ENCODE measurements at regions of chr6 and their contacts with region 1.

Region 1: DNA sequence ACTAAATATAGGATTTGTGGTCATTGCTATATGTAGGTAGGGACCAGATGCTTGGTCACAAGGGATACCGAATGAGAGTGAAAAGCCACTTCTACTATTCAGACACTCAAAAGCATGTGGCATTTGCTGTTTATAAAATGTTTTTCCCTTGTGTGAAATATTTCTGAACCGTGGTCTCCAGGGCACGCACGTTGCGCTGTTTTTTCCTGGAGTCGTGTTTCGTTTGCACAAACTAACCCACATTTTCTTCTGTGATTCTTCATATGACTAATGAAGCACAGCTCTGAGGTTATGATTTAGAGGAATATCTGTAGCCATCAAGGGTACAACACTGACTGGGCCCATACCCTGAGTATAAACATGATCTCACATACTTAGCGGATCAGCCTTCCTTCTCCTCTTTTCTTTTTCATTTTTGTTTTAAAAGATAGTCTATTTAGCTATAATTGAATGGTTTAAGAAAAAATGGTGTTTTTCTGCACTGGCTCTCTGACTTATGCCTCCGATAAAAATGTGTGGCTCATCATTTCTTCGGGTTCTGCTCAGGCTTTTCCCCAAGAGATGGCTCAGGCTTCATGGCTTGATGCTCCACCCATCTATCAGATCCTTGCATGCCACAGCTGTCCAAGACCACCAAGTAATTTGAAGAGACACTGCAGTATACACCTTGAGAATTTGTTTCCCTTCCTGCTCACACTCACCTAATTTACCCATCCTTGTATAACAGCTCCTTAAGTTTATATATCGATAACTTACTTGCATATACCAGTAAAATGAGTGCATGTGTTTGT is 59.9 kb upstream of the HBS1L start:
- DNase-seq: peak; percentile 82
- ATAC-seq: peak; percentile 70
- H3K4me3 Mint-ChIP-seq: peak overlapping the region; percentile 54
- H3K27ac Mint-ChIP-seq: peak overlapping the region; percentile 95
- H3K4me1 Mint-ChIP-seq: peaks cover 79% of the 10 kb centered on the region
- H3K27me3 Mint-ChIP-seq: no peaks in the 10 kb centered on the region

Region 2: DNA sequence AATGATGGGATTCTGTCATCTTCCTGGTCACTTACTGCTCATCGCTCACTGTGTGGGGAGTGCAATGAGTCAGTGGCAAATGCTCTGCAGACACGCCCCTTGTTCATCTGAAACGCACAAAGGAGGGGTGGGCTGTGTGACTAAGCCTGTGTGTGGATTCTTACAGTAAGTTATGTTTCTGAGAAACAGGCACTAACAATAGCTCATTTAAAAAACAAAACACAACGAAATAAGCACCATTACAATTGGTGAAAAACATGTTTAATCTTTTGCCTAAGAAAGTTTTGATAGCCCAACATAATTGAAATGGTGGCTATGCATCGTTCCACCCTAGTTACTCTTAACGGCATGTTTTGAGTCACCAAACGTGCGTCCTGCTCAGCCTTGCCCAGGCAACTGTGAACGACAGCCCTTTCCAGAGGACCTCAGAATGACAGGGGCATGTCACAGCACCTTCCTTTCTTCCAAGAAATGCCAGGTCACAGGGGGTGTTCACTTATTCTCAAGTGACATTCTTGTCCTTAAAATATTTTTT is 678.2 kb before region 1 on chr6:
- CTCF ChIA-PET with region 1: no interaction called
- POLR2A ChIA-PET with region 1: no interaction called
- intact Hi-C with region 1: loop called in 1 of 2 experiments (anchors 2 kb)
- DNase-seq: peak; percentile 84
- ATAC-seq: peak; percentile 90
- H3K4me3 Mint-ChIP-seq: no peak overlapping the region
- H3K27ac Mint-ChIP-seq: peak overlapping the region; percentile 80
- H3K4me1 Mint-ChIP-seq: peaks cover 36% of the 10 kb centered on the region
- H3K27me3 Mint-ChIP-seq: no peaks in the 10 kb centered on the region

Region 3: DNA sequence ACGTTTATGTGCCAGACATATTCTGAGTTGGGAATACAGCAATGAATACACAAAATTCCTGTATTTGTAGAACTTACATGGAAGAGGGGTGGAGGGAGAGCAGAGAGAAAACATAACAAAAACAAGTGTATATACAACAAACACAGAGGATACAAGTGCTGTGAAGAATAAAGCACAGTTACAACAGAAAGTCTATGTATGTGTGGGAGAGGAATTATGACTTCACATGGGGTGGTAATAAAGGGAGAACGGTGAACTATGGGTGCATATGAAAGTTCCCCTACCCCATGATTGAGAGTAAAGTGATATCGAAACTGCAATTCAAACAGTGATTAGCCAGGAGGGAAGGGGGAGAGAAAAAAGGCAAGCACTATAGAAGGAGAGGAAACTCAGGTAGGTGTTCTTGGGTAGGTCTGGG is 84.5 kb before region 1 on chr6:
- CTCF ChIA-PET with region 1: interaction called, 3 read pairs
- POLR2A ChIA-PET with region 1: no interaction called
- intact Hi-C with region 1: loop called in 1 of 2 experiments (anchors 1 kb)
- DNase-seq: no peak
- ATAC-seq: peak; percentile 97
- H3K4me3 Mint-ChIP-seq: peak overlapping the region; percentile 54
- H3K27ac Mint-ChIP-seq: peak overlapping the region; percentile 75
- H3K4me1 Mint-ChIP-seq: peaks cover 69% of the 10 kb centered on the region
- H3K27me3 Mint-ChIP-seq: no peaks in the 10 kb centered on the region

Region 4: GRCh38 chr6:135094403-135094848 is 20.1 kb before region 1 on chr6:
- CTCF ChIA-PET with region 1: interaction called, 6 read pairs
- POLR2A ChIA-PET with region 1: interaction called, 7 read pairs
- intact Hi-C with region 1: loop called (anchors 1 kb)
- DNase-seq: peak; percentile 56
- ATAC-seq: peak; percentile 89
- H3K4me3 Mint-ChIP-seq: no peak overlapping the region
- H3K27ac Mint-ChIP-seq: peak overlapping the region; percentile 79
- H3K4me1 Mint-ChIP-seq: peaks cover 57% of the 10 kb centered on the region
- H3K27me3 Mint-ChIP-seq: no peaks in the 10 kb centered on the region

Region 5: GRCh38 chr6:135162678-135163439 is 48.3 kb after region 1 on chr6:
- CTCF ChIA-PET with region 1: interaction called, 4 read pairs
- POLR2A ChIA-PET with region 1: no interaction called
- intact Hi-C with region 1: loop called (anchors 1 kb)
- DNase-seq: peak; percentile 67
- ATAC-seq: no peak
- H3K4me3 Mint-ChIP-seq: peak overlapping the region; percentile 24
- H3K27ac Mint-ChIP-seq: peak overlapping the region; percentile 94
- H3K4me1 Mint-ChIP-seq: peaks cover 64% of the 10 kb centered on the region
- H3K27me3 Mint-ChIP-seq: no peaks in the 10 kb centered on the region

Region 6: DNA sequence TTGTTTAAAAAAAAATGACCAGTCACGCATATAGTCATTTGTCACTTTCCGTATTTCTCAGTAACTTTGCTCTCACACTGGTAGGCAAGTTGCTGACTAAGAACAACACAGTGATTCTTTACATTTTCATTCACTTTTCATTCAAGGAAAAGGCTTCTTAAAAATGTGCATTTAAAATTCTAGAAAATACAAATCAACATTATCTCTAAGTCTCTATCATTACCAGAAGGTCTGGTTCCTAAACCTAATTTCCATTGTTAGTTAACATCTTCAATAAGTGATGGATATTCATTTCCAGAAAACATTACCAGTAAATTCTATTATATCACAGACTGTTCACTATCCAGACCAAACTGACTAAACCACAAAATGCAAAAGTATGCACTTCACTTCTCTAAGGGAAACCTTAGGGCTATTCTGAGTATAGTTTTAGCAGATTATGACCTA is 267.7 kb after region 1 on chr6:
- CTCF ChIA-PET with region 1: no interaction called
- POLR2A ChIA-PET with region 1: no interaction called
- intact Hi-C with region 1: loop called in 1 of 2 experiments (anchors 5 kb)
- DNase-seq: no peak
- ATAC-seq: peak; percentile 63
- H3K4me3 Mint-ChIP-seq: no peak overlapping the region
- H3K27ac Mint-ChIP-seq: no peak overlapping the region
- H3K4me1 Mint-ChIP-seq: no peaks in the 10 kb centered on the region
- H3K27me3 Mint-ChIP-seq: no peaks in the 10 kb centered on the region